Stomach (tissue), 19 donors: ENCODE measurements at regions of chr10 and their contacts with region 1.

Region 1: DNA sequence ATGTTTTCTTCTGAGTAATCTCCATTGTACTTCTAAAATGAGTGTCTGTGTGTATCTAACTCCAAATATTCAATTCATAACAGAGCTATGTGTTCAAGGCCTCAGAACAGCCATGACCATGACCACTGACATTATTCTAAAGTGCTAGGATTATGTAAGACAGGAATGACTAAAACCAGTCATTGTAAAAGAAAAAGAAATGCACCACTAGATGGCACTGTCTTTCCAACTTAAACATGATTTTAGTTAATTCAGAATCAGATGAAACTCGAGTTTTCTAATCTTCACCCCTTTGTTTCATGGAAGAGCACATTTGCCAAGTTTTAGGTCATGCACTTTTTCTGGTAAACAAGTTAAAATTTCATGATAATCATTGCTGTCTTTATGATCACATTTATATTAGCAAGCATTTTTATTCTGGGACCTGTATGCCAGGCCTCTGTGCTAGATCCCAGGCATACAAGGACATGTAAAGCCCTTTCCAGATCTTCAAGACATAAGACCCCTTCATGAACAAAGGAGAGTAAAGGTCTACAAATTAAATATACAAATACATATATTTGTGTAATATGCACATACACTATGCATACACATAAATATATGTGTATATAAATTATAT is 26.1 kb upstream of the RSU1 start:
- DNase-seq: peak in 1 of 2 donors; percentile 78
- H3K4me3 ChIP-seq: no peak overlapping the region
- H3K27ac ChIP-seq: no peak overlapping the region
- H3K4me1 ChIP-seq: no peaks in the 10 kb centered on the region
- H3K27me3 ChIP-seq: no peaks in the 10 kb centered on the region
- CTCF ChIP-seq: peak in 5 of 7 experiments; percentile 14 to 71 (median 66)
- EP300 ChIP-seq: no peak
- POLR2A ChIP-seq: no peak

Region 2: GRCh38 chr10:17257466-17258321 is 414.3 kb after region 1 on chr10:
- intact Hi-C with region 1: loop called (anchors 5 kb)
- DNase-seq: peak; percentile 36 to 88
- H3K4me3 ChIP-seq: no peak overlapping the region
- H3K27ac ChIP-seq: no peak overlapping the region
- H3K4me1 ChIP-seq: peaks cover 0 to 8% (median 3%) of the 10 kb centered on the region in 4 donors
- H3K27me3 ChIP-seq: no peaks in the 10 kb centered on the region
- CTCF ChIP-seq: peak in 5 of 7 experiments; percentile 69 to 82 (median 74)
- EP300 ChIP-seq: no peak
- POLR2A ChIP-seq: no peak

Region 3: DNA sequence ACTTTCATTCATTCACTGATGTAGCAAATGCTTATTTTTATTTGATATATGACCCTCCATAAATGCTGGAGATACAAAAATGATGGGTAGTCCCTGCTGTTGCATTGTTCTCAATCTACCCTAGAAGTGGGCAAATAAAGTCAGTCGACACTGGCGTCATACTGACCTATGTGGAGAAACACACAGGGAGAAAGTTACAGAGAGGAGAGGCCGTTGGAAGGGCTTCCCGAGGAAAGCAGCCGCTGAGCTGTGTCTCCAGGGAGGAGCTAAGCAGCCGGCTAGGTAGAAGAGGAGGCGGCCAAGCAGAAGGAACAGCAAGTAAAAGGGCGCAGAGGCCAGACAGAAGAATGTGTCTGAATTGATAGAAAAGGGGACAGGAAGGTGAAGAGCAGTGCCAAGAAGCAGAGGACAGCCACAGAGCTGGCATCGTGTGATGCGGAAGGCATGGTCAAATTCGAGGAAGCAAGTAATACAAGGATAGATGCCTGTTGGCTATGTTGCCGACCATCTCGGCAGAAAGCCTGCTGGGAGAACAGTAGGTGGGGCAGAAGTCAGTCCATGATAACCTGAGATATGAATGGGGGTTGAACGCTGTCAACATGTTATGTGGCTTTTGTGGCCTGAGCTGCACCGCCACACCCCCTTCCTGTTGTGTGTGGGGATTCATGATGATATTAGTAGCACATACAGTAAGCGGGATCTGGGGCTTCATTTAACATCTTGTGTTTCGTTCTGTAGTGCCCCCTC is 585.2 kb after region 1 on chr10:
- intact Hi-C with region 1: loop called (anchors 10 kb)
- DNase-seq: peak in 1 of 2 donors; percentile 50
- H3K4me3 ChIP-seq: no peak overlapping the region
- H3K27ac ChIP-seq: no peak overlapping the region
- H3K4me1 ChIP-seq: peaks cover 0 to 20% (median 7%) of the 10 kb centered on the region in 4 donors
- H3K27me3 ChIP-seq: peaks cover 0 to 18% (median 5%) of the 10 kb centered on the region in 3 donors
- CTCF ChIP-seq: no peak
- EP300 ChIP-seq: no peak
- POLR2A ChIP-seq: no peak